ENCODE measurements at regions of chr3 and their contacts with region 1.

Region 1: GRCh38 chr3:146577662-146578061 is 27.5 kb downstream of the PLSCR5 start:
- DNase-seq: peak in 25 of 35 experiments; percentile 2 to 71 (median 17)
- ATAC-seq: peak in 1 of 4 experiments; percentile 58
- H3K4me3 ChIP-seq: no peak overlapping the region
- H3K4me3 Mint-ChIP-seq: no peak overlapping the region
- H3K27ac ChIP-seq: no peak overlapping the region
- H3K27ac Mint-ChIP-seq: no peak overlapping the region
- H3K4me1 ChIP-seq: no peaks in the 10 kb centered on the region
- H3K4me1 Mint-ChIP-seq: no peaks in the 10 kb centered on the region
- H3K27me3 ChIP-seq: no peaks in the 10 kb centered on the region
- H3K27me3 Mint-ChIP-seq: no peaks in the 10 kb centered on the region

Region 2: GRCh38 chr3:146065573-146066006 is 512.1 kb before region 1 on chr3:
- CTCF ChIA-PET with region 1: interaction called in 1 of 2 experiments, 11 read pairs
- POLR2A ChIA-PET with region 1: interaction called in 1 of 2 experiments, 3 read pairs
- DNase-seq: peak in 1 of 35 experiments; percentile 25
- ATAC-seq: no peak
- H3K4me3 ChIP-seq: no peak overlapping the region
- H3K4me3 Mint-ChIP-seq: no peak overlapping the region
- H3K27ac ChIP-seq: no peak overlapping the region
- H3K27ac Mint-ChIP-seq: no peak overlapping the region
- H3K4me1 ChIP-seq: no peaks in the 10 kb centered on the region
- H3K4me1 Mint-ChIP-seq: no peaks in the 10 kb centered on the region
- H3K27me3 ChIP-seq: no peaks in the 10 kb centered on the region
- H3K27me3 Mint-ChIP-seq: no peaks in the 10 kb centered on the region

Region 3: GRCh38 chr3:146189519-146190173 is 388.0 kb before region 1 on chr3:
- CTCF ChIA-PET with region 1: interaction called, 18 to 28 read pairs
- POLR2A ChIA-PET with region 1: no interaction called
- DNase-seq: peak in 2 of 35 experiments; percentile 2 to 42
- ATAC-seq: peak in 3 of 4 experiments; percentile 36 to 50 (median 37)
- H3K4me3 ChIP-seq: no peak overlapping the region
- H3K4me3 Mint-ChIP-seq: no peak overlapping the region
- H3K27ac ChIP-seq: no peak overlapping the region
- H3K27ac Mint-ChIP-seq: no peak overlapping the region
- H3K4me1 ChIP-seq: no peaks in the 10 kb centered on the region
- H3K4me1 Mint-ChIP-seq: no peaks in the 10 kb centered on the region
- H3K27me3 ChIP-seq: no peaks in the 10 kb centered on the region
- H3K27me3 Mint-ChIP-seq: peaks cover 0 to 13% of the 10 kb centered on the region in 2 donors

Region 4: DNA sequence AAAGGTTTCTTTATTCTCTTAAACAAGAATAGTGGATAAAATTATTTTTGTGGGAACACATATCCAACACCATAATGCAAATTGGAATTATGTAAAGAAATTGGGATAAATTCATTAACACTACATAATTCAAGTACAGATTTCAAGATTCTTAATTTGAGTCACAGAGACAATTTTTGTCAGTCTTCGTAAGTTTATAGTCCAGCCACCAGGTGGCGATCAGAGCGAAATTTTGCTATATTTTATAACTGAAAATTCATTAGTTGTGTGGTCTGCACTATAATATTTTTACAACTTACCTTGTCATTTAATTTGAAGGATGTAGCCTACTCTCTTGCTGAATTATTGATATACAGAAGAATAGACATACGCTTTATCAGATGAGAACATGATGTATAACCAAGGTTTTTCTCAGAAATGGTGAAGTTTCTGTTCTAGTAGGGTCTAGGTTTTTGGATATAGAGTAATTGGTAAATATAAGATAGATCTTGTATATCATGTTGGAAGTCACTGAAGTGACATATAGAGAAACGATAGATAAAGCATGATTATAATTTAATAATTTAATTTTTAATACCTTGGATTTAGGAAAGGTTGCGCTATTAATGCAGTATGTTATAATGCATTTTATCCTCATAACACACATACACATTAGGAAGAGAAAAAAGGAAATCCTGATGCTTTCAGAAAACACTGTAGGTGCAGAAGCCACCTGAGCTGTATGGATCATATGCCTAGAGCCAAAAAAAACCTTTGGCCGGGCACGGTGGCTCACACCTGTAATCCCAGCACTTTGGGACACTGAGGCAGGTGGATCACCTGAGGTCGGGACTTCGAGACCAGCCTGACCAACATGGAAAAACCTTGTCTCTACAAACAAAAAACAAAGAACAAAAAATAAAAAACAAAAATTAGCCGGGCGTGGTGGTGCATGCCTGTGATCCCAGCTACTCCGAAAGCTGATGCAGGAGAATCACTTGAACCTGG is 358.5 kb before region 1 on chr3:
- CTCF ChIA-PET with region 1: interaction called, 4 to 12 read pairs
- POLR2A ChIA-PET with region 1: no interaction called
- DNase-seq: peak in 24 of 35 experiments; percentile 1 to 57 (median 12)
- ATAC-seq: no peak
- H3K4me3 ChIP-seq: no peak overlapping the region
- H3K4me3 Mint-ChIP-seq: no peak overlapping the region
- H3K27ac ChIP-seq: no peak overlapping the region
- H3K27ac Mint-ChIP-seq: no peak overlapping the region
- H3K4me1 ChIP-seq: no peaks in the 10 kb centered on the region
- H3K4me1 Mint-ChIP-seq: no peaks in the 10 kb centered on the region
- H3K27me3 ChIP-seq: no peaks in the 10 kb centered on the region
- H3K27me3 Mint-ChIP-seq: peaks cover 6 to 8% of the 10 kb centered on the region in 2 donors

Region 5: GRCh38 chr3:146517684-146518435 is 59.8 kb before region 1 on chr3:
- CTCF ChIA-PET with region 1: no interaction called
- POLR2A ChIA-PET with region 1: no interaction called
- DNase-seq: no peak
- ATAC-seq: no peak
- H3K4me3 ChIP-seq: no peak overlapping the region
- H3K4me3 Mint-ChIP-seq: no peak overlapping the region
- H3K27ac ChIP-seq: no peak overlapping the region
- H3K27ac Mint-ChIP-seq: no peak overlapping the region
- H3K4me1 ChIP-seq: peaks cover 2 to 8% of the 10 kb centered on the region in 2 experiments
- H3K4me1 Mint-ChIP-seq: peaks cover 10 to 12% (median 12%) of the 10 kb centered on the region in 3 donors
- H3K27me3 ChIP-seq: no peaks in the 10 kb centered on the region
- H3K27me3 Mint-ChIP-seq: no peaks in the 10 kb centered on the region

Region 6: DNA sequence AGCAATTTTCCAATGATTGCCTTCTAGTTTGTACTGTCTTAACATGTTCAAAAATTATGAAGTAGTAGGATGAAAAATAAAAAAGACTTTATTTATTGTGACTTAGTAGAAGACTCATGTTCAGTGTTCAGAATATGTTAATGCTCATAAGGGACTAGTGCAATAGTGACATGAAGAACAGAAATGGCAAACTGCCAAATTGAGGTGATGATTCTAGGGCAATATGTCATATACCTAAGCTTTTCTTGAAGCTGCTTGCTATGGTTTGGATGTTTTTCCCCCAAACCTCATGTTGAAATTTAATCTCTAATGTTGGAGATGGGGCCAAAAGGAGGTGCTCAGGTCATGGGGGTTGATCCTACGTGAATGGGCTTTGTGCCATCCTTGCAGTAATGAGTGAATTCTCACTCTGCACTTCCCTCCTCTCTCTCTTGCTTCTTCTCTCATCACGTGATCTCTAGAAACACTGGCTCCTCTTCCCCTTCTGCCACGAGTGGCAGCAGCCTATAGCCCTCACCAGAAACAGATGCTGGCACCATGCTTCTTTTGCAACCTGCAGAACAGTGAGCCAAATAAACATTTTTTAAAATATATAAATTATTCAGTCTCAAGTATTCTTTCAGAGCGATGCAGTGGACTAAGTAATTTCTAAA is 20.0 kb before region 1 on chr3:
- CTCF ChIA-PET with region 1: no interaction called
- POLR2A ChIA-PET with region 1: no interaction called
- DNase-seq: no peak
- ATAC-seq: no peak
- H3K4me3 ChIP-seq: no peak overlapping the region
- H3K4me3 Mint-ChIP-seq: no peak overlapping the region
- H3K27ac ChIP-seq: no peak overlapping the region
- H3K27ac Mint-ChIP-seq: no peak overlapping the region
- H3K4me1 ChIP-seq: no peaks in the 10 kb centered on the region
- H3K4me1 Mint-ChIP-seq: peaks cover 0 to 6% (median 0%) of the 10 kb centered on the region in 3 donors
- H3K27me3 ChIP-seq: peaks cover 0 to 6% of the 10 kb centered on the region in 2 experiments
- H3K27me3 Mint-ChIP-seq: no peaks in the 10 kb centered on the region

Region 7: DNA sequence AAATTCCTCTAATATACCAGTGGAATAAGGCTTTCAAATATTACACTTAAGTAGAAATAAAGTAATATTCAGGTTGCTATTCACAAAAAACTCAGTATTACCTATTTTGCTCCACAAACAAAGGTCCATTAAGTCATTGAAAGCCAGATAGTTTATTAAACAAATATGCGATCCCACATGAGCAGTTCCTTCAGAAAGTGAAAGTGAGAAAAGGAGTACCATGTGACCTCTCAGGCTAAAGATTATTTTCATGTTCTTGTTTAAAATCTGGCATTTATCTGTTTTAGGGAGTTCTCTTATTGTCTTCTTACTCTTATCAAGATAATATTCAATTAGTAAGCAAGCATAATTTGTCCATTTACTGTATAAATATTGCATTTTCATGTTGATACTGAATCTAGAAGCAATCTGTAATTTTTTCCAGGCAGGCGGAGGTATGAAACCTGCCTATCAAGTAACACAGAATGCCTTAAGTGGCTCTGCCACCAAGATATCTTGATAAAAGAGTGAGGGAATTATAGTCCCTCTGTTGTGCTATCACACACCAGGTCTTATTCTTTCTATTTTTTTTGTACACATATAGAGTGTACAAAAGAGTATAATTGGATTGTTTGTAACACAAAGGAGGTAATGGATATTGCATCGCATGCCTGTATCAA is 47.6 kb after region 1 on chr3:
- CTCF ChIA-PET with region 1: no interaction called
- POLR2A ChIA-PET with region 1: no interaction called
- DNase-seq: no peak
- ATAC-seq: no peak
- H3K4me3 ChIP-seq: no peak overlapping the region
- H3K4me3 Mint-ChIP-seq: peak overlapping the region; percentile 37 to 53 (median 41)
- H3K27ac ChIP-seq: no peak overlapping the region
- H3K27ac Mint-ChIP-seq: no peak overlapping the region
- H3K4me1 ChIP-seq: no peaks in the 10 kb centered on the region
- H3K4me1 Mint-ChIP-seq: peaks cover 6 to 9% (median 7%) of the 10 kb centered on the region in 3 donors
- H3K27me3 ChIP-seq: no peaks in the 10 kb centered on the region
- H3K27me3 Mint-ChIP-seq: peaks cover 0 to 4% of the 10 kb centered on the region in 2 donors

Region 8: DNA sequence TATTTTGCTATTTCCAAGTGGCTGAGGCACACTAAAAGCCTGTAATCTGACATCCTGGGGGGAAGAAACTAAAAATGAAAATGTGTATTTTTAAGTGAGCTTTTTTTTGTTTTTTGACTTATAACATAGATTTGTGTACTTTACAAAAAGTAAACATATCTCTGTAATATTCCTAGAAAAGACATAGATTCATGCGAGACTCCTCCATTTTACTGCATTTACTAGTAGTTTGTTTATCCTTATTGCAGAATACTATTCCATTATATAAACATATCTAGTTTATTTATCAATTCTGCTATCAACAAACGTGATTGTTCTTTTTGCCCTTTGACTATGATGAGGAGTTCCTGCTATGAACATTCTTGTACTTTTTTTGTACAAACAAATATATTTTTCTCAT is 95.3 kb after region 1 on chr3:
- CTCF ChIA-PET with region 1: no interaction called
- POLR2A ChIA-PET with region 1: no interaction called
- DNase-seq: no peak
- ATAC-seq: no peak
- H3K4me3 ChIP-seq: no peak overlapping the region
- H3K4me3 Mint-ChIP-seq: no peak overlapping the region
- H3K27ac ChIP-seq: no peak overlapping the region
- H3K27ac Mint-ChIP-seq: no peak overlapping the region
- H3K4me1 ChIP-seq: no peaks in the 10 kb centered on the region
- H3K4me1 Mint-ChIP-seq: no peaks in the 10 kb centered on the region
- H3K27me3 ChIP-seq: no peaks in the 10 kb centered on the region
- H3K27me3 Mint-ChIP-seq: no peaks in the 10 kb centered on the region